Transverse colon (tissue), 4 donors: ENCODE measurements at regions of chr1 and their contacts with region 1.

Region 1: GRCh38 chr1:245201827-245202226 is 47.0 kb downstream of the KIF26B start:
- DNase-seq: no peak
- H3K4me3 ChIP-seq: no peak overlapping the region
- H3K27ac ChIP-seq: no peak overlapping the region
- H3K4me1 ChIP-seq: no peaks in the 10 kb centered on the region
- H3K27me3 ChIP-seq: no peaks in the 10 kb centered on the region
- CTCF ChIP-seq: no peak
- EP300 ChIP-seq: no peak
- POLR2A ChIP-seq: no peak

Region 2: DNA sequence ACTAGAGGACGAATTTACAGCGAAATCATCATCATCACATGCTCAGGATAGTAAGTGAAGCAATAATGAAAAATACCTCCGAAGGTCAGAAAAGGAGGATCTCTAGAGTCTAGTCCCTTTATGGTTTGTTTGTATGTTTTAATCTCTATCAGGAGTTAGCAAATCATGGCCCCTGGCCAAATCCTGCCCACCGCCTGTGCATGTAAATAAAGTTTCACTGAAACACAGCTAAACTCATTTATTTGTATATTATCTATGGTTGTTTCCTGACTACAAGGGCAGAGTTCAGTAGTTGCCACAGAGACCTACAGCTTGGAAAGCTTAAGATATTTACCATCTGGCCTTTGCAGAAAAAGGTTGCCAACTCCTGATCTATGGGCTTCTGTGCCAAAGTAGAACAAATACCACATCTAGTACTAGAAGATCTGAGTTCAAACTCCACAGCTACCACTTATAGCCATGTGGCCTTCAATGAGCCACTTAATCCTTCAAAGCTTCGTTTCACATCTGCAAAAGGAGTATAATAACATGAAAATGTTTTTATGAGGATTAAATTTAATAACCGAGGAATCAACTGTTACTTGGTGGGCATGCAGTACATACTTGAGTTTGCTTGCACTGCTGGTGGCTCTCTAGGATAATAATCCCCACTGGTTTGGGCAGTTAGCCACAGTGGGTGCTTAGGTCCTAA is 141.0 kb before region 1 on chr1:
- in situ Hi-C with region 1: no loop called
- intact Hi-C with region 1: no loop called
- DNase-seq: peak; percentile 83
- H3K4me3 ChIP-seq: no peak overlapping the region
- H3K27ac ChIP-seq: peak overlapping the region in 2 of 4 donors; percentile 27 to 47
- H3K4me1 ChIP-seq: peaks cover 0 to 18% (median 5%) of the 10 kb centered on the region in 4 donors
- H3K27me3 ChIP-seq: no peaks in the 10 kb centered on the region
- CTCF ChIP-seq: no peak
- EP300 ChIP-seq: no peak
- POLR2A ChIP-seq: no peak

Region 3: GRCh38 chr1:246476771-246477170 is 1274.9 kb after region 1 on chr1:
- in situ Hi-C with region 1: no loop called
- intact Hi-C with region 1: no loop called
- DNase-seq: no peak
- H3K4me3 ChIP-seq: no peak overlapping the region
- H3K27ac ChIP-seq: no peak overlapping the region
- H3K4me1 ChIP-seq: no peaks in the 10 kb centered on the region
- H3K27me3 ChIP-seq: no peaks in the 10 kb centered on the region
- CTCF ChIP-seq: no peak
- EP300 ChIP-seq: no peak
- POLR2A ChIP-seq: no peak

Region 4: DNA sequence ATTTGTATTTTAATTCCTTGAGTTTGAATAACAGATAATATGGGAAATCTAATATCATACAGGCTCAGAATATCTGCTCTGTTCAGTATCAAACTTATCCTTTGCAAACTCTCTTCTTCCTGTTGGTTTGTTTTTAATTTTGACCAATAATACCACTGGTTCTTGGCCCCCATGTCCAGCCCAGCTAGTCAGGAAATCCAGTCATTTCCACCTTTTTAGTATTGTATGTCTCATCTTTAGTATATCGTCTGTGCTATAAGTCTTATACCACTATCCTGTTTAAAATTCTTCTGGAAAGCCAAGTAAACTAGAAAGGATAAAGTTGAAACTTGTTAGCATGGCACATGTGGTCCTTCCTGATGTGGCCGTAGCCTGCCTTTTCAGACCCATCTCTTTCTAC is 1533.0 kb after region 1 on chr1:
- in situ Hi-C with region 1: no loop called
- intact Hi-C with region 1: loop called (anchors 5 kb)
- DNase-seq: no peak
- H3K4me3 ChIP-seq: no peak overlapping the region
- H3K27ac ChIP-seq: no peak overlapping the region
- H3K4me1 ChIP-seq: no peaks in the 10 kb centered on the region
- H3K27me3 ChIP-seq: no peaks in the 10 kb centered on the region
- CTCF ChIP-seq: no peak
- EP300 ChIP-seq: no peak
- POLR2A ChIP-seq: no peak